ENCODE measurements at regions of chrX and their contacts with region 1.

Region 1: GRCh38 chrX:129772796-129773431 is 6.8 kb upstream of the SASH3 start:
- DNase-seq: peak; percentile 64
- ATAC-seq: peak; percentile 26
- H3K4me3 Mint-ChIP-seq: peak overlapping the region; percentile 58
- H3K27ac Mint-ChIP-seq: peak overlapping the region; percentile 93
- H3K4me1 Mint-ChIP-seq: peaks cover 70% of the 10 kb centered on the region
- H3K27me3 Mint-ChIP-seq: no peaks in the 10 kb centered on the region
- CTCF ChIP-seq: no peak

Region 2: DNA sequence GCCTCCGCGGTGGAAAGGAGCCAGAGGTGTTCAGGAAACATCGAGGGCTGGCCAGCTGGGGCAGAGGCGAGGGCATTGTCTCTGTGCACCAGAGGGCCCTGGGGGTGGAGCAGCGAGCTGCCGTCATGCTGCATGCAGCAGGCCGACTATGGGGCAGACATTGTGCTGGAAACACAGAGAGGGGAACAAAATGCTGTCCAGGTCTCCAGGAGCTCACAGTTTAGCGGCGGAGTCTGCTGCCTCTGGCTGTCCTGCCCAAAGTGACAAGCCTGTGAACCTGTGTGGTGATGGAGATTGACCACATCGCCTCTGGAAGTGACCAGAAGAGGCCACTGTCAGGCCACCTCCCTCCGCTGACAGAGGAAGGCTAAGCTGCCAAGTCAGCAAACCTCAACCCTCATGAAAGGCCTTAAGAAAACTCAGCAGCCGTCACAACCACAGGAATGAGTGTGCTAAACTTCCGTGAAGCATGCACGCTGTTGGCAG is 13.3 kb before region 1 on chrX:
- CTCF ChIA-PET with region 1: interaction called, 7 read pairs
- POLR2A ChIA-PET with region 1: interaction called, 25 read pairs
- intact Hi-C with region 1: no loop called
- DNase-seq: peak; percentile 77
- ATAC-seq: peak; percentile 75
- H3K4me3 Mint-ChIP-seq: peak overlapping the region; percentile 19
- H3K27ac Mint-ChIP-seq: peak overlapping the region; percentile 85
- H3K4me1 Mint-ChIP-seq: peaks cover 61% of the 10 kb centered on the region
- H3K27me3 Mint-ChIP-seq: no peaks in the 10 kb centered on the region
- CTCF ChIP-seq: no peak

Region 3: GRCh38 chrX:129900054-129900453 is 127.1 kb after region 1 on chrX:
- CTCF ChIA-PET with region 1: no interaction called
- POLR2A ChIA-PET with region 1: no interaction called
- intact Hi-C with region 1: no loop called
- DNase-seq: no peak
- ATAC-seq: no peak
- H3K4me3 Mint-ChIP-seq: no peak overlapping the region
- H3K27ac Mint-ChIP-seq: no peak overlapping the region
- H3K4me1 Mint-ChIP-seq: peaks cover 4% of the 10 kb centered on the region
- H3K27me3 Mint-ChIP-seq: no peaks in the 10 kb centered on the region
- CTCF ChIP-seq: no peak